Heart left ventricle (tissue), 16 donors: ENCODE measurements at regions of chr1 and their contacts with region 1.

Region 1: DNA sequence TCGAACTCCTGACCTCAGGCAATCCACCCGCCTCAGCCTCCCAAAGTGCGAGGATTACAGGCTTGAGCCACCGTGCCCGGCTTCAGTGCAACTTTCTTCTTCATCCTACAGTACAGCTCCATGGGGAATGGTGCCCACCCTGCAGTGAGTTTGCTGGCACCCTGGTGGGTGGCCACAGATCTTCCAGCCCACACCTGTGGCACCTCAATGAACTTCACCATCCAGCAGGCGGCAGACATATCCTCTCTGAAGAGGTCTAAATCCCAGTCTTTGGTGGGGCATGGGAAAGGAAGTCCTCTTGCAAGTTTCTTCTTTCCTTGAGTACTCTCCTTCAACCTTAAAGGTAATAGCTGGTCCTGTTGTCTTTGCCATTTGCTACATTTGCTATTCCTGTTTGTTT is 18.1 kb upstream of the ZBTB8A start:
- DNase-seq: no peak
- ATAC-seq: no peak
- H3K4me3 ChIP-seq: peak overlapping the region in 2 of 12 donors; percentile 41 to 50
- H3K27ac ChIP-seq: no peak overlapping the region
- H3K4me1 ChIP-seq: peaks cover 0 to 4% (median 0%) of the 10 kb centered on the region in 12 donors
- H3K27me3 ChIP-seq: no peaks in the 10 kb centered on the region
- CTCF ChIP-seq: no peak
- POLR2A ChIP-seq: no peak

Region 2: DNA sequence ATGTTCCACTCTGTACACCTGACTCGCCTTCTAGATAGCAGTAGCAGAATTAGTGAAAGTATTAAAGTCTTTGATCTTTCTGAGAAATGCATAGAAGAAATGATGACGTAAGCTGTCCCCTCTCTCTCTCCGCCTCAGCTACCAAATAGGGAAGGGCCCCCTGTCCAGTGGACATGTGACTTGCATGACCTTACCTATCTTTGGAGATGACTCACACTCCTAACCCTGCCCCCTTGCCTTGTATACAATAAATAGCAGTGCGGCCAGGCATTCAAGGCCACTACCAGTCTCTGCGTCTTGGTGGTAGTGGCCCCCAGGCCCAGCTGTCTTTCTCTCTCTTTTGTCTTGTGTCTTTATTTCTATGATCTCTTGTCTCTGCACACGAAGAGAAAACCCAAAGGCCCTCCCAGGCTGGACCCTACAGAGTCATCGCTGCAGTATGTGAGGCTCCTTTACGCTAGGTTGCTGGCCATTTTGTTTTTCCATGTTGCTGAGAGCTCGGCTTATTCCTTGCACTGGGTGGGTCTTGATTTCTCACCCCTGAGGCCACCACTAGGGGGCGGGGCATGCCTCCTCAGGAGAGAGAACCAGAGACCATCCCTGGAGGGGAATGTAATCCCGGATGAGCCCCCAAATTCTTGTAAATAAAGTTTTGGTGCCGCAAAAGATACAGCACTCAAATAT is 72.2 kb before region 1 on chr1:
- intact Hi-C with region 1: loop called in 1 of 10 experiments (anchors 5 kb)
- DNase-seq: no peak
- ATAC-seq: no peak
- H3K4me3 ChIP-seq: no peak overlapping the region
- H3K27ac ChIP-seq: no peak overlapping the region
- H3K4me1 ChIP-seq: peaks cover 0 to 3% (median 0%) of the 10 kb centered on the region in 12 donors
- H3K27me3 ChIP-seq: peaks cover 0 to 8% (median 0%) of the 10 kb centered on the region in 9 donors
- CTCF ChIP-seq: peak in 4 of 12 donors; percentile 7 to 20 (median 12)
- POLR2A ChIP-seq: no peak

Region 3: GRCh38 chr1:32612189-32612881 is 91.2 kb after region 1 on chr1:
- intact Hi-C with region 1: loop called in 2 of 10 experiments (anchors 10 kb)
- DNase-seq: peak; percentile 88 to 95 (median 94)
- ATAC-seq: peak; percentile 100
- H3K4me3 ChIP-seq: peak overlapping the region; percentile 30 to 74 (median 56)
- H3K27ac ChIP-seq: peak overlapping the region in 10 of 12 donors; percentile 54 to 83 (median 64)
- H3K4me1 ChIP-seq: peaks cover 0 to 14% (median 7%) of the 10 kb centered on the region in 12 donors
- H3K27me3 ChIP-seq: no peaks in the 10 kb centered on the region
- CTCF ChIP-seq: peak in 11 of 12 donors; percentile 20 to 56 (median 35)
- POLR2A ChIP-seq: peak in 1 of 2 donors; percentile 78

Region 4: DNA sequence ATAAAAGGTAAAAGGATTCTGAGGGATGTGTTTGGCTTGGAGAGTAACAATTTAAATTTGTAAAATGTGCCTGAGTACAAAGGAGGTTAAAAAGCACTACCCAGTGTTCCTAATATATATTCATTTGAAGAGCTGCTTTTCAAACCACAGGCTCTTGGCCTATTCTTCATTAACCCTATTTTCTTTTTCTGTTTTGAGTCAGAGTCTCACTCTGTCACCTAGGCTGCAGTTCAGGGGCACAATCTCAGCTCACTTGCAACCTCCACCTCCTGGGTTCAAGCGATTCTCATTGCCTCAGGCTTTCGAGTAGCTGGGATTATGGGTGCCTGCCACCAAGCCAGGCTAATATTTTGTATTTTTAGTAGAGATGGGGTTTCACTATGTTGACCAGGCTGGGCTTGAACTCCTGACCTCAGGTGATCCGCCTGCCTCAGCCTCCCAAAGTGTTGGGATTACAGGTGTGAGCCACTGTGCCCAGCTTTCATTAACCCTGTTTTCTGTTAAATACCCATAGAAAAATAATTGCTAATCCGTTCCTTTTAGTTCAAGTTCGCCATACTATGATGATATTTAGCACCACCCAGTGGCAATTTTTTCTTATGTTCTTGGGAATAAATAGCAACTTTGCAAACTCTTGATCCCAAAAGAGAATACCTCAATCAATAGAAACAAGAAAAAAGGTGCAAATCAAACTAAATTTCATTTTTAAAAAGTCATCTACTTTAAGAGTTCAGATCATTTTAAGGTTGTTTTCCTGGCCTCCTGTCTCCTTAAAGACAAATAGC is 98.7 kb after region 1 on chr1:
- intact Hi-C with region 1: loop called in 3 of 10 experiments (anchors 10 kb)
- DNase-seq: no peak
- ATAC-seq: no peak
- H3K4me3 ChIP-seq: no peak overlapping the region
- H3K27ac ChIP-seq: no peak overlapping the region
- H3K4me1 ChIP-seq: no peaks in the 10 kb centered on the region
- H3K27me3 ChIP-seq: no peaks in the 10 kb centered on the region
- CTCF ChIP-seq: peak in 6 of 12 donors; percentile 13 to 28 (median 20)
- POLR2A ChIP-seq: no peak

Region 5: GRCh38 chr1:32652244-32652962 is 131.2 kb after region 1 on chr1:
- intact Hi-C with region 1: no loop called
- DNase-seq: no peak
- ATAC-seq: no peak
- H3K4me3 ChIP-seq: peak overlapping the region in 10 of 12 donors; percentile 55 to 95 (median 72)
- H3K27ac ChIP-seq: peak overlapping the region in 3 of 12 donors; percentile 97 to 99 (median 98)
- H3K4me1 ChIP-seq: peaks cover 2 to 59% (median 27%) of the 10 kb centered on the region in 12 donors
- H3K27me3 ChIP-seq: no peaks in the 10 kb centered on the region
- CTCF ChIP-seq: no peak
- POLR2A ChIP-seq: no peak

Region 6: DNA sequence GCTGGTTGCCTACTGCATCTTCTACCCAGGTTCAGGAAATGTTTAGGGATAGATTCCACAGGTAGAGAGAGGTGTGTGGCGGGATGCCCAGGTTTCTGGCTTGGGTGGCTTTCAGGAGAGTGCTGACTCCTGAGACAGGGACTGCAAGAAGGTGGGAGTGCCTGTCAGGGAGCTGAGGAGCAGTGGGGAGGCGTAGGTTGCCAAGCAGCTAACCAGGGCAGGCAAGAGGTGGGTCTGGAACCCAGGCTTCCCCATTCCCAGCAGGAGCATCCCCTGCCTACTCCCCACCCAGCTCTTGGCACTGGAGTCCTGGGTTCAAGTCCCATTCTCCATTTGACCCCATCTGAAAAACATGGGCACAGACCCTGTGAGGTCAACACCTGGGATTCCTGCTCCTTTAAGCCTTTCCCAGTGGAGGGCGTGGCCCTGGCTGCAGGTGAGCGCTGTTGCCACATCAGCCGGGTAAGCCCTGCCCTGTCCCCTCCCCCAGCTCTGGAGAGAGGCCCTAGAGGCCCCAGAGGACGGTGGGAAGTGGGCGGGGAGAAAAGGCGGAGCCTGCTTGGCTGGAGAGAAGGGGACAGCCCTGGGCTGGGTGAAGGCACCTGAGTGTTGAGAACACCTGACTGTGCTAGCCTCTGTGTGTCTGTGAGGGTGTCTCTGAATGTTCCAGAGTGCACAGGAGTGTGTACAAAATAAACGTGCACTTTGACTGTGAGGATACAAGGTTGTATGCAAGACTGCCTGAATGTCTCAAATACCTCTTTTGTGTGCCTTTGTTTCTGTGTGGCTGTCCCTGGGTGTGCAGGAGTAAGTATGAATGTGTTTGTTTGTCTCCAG is 195.4 kb after region 1 on chr1:
- intact Hi-C with region 1: loop called in 1 of 10 experiments (anchors 5 kb)
- DNase-seq: peak in 4 of 5 donors; percentile 48 to 70 (median 61)
- ATAC-seq: peak; percentile 61 to 72 (median 68)
- H3K4me3 ChIP-seq: no peak overlapping the region
- H3K27ac ChIP-seq: no peak overlapping the region
- H3K4me1 ChIP-seq: peaks cover 0 to 10% (median 3%) of the 10 kb centered on the region in 12 donors
- H3K27me3 ChIP-seq: peaks cover 0 to 3% (median 0%) of the 10 kb centered on the region in 9 donors
- CTCF ChIP-seq: no peak
- POLR2A ChIP-seq: peak in 1 of 2 donors; percentile 16